ENCODE measurements at regions of chr6 and their contacts with region 1.

Region 1: DNA sequence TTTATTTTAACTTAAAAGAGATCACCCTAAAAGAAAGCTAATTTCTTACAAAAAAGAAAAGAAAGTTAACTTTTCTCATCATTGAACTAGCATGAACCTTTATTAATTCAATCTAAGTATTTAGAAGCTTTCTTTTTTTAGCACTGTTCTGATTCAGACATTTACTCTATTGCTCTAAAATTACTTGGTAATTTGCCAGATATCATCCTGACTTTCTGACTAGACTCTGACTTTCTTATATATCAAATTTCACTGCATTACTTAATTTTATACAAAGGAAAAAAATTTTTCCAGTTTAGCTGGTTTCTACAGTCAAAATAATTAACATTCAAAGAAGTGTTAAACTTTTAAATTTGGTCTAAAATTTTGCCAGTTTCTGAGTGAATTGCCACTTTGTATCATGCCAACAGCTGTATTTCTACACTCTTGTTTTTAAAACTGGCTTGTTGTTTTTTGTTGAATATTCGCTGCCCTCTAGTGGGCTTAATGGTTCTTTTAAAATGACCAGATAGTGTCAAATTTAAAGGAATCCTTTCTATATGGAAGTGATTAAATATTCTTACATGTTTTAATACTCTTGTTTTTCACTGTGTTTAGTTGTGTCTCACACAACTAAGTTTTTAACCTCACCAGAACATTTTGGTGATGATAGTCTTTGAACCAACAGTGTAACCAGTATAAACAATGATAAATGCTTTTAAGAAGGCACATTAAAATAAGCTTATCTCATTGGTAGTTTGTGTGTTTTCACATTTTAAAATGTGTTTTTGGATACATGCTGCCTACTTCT is 102.0 kb downstream of the POPDC3 start:
- DNase-seq: peak in 1 of 2 experiments; percentile 22
- H3K4me3 ChIP-seq: no peak overlapping the region
- H3K4me3 Mint-ChIP-seq: no peak overlapping the region
- H3K27ac Mint-ChIP-seq: no peak overlapping the region
- H3K4me1 ChIP-seq: 0 out of 2 replicates have a peak, but pooled peaks cover 2% of the 10 kb centered on the region
- H3K4me1 Mint-ChIP-seq: peaks cover 7% of the 10 kb centered on the region
- H3K27me3 ChIP-seq: no peaks in the 10 kb centered on the region
- H3K27me3 Mint-ChIP-seq: no peaks in the 10 kb centered on the region
- CTCF ChIP-seq: peak; percentile 44 to 48

Region 2: GRCh38 chr6:104548297-104548696 is 529.5 kb before region 1 on chr6:
- CTCF ChIA-PET with region 1: no interaction called
- POLR2A ChIA-PET with region 1: no interaction called
- intact Hi-C with region 1: no loop called
- DNase-seq: no peak
- H3K4me3 ChIP-seq: no peak overlapping the region
- H3K4me3 Mint-ChIP-seq: no peak overlapping the region
- H3K27ac Mint-ChIP-seq: no peak overlapping the region
- H3K4me1 ChIP-seq: no peaks in the 10 kb centered on the region
- H3K4me1 Mint-ChIP-seq: no peaks in the 10 kb centered on the region
- H3K27me3 ChIP-seq: no peaks in the 10 kb centered on the region
- H3K27me3 Mint-ChIP-seq: no peaks in the 10 kb centered on the region
- CTCF ChIP-seq: no peak

Region 3: GRCh38 chr6:104682722-104683643 is 394.8 kb before region 1 on chr6:
- CTCF ChIA-PET with region 1: no interaction called
- POLR2A ChIA-PET with region 1: no interaction called
- intact Hi-C with region 1: loop called (anchors 5 kb)
- DNase-seq: peak; percentile 68 to 71
- H3K4me3 ChIP-seq: no peak overlapping the region
- H3K4me3 Mint-ChIP-seq: no peak overlapping the region
- H3K27ac Mint-ChIP-seq: no peak overlapping the region
- H3K4me1 ChIP-seq: no peaks in the 10 kb centered on the region
- H3K4me1 Mint-ChIP-seq: no peaks in the 10 kb centered on the region
- H3K27me3 ChIP-seq: no peaks in the 10 kb centered on the region
- H3K27me3 Mint-ChIP-seq: no peaks in the 10 kb centered on the region
- CTCF ChIP-seq: peak; percentile 74 to 86

Region 4: DNA sequence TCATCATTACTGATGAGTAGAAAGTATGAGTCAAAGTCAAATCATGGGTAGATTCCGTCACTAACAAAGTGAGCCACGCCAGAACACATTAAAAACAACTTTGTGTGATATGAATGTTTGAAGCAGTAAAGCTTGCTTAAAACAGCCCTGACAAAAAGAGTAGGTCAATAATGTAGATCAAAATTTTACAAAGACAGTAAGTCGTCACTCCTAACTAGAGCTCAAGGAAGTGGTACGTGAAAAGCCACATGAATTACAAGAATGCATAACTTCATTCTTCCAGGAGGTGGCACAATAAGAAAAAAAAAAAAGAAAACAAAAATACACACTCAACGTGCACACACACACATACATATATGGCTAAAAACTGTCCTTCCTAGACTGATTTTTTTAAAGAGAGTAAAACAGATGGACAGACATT is 288.0 kb before region 1 on chr6:
- CTCF ChIA-PET with region 1: no interaction called
- POLR2A ChIA-PET with region 1: no interaction called
- intact Hi-C with region 1: loop called (anchors 1 kb)
- DNase-seq: peak in 1 of 2 experiments; percentile 18
- H3K4me3 ChIP-seq: no peak overlapping the region
- H3K4me3 Mint-ChIP-seq: no peak overlapping the region
- H3K27ac Mint-ChIP-seq: no peak overlapping the region
- H3K4me1 ChIP-seq: no peaks in the 10 kb centered on the region
- H3K4me1 Mint-ChIP-seq: peaks cover 7% of the 10 kb centered on the region
- H3K27me3 ChIP-seq: no peaks in the 10 kb centered on the region
- H3K27me3 Mint-ChIP-seq: no peaks in the 10 kb centered on the region
- CTCF ChIP-seq: peak in 1 of 2 experiments; percentile 29

Region 5: DNA sequence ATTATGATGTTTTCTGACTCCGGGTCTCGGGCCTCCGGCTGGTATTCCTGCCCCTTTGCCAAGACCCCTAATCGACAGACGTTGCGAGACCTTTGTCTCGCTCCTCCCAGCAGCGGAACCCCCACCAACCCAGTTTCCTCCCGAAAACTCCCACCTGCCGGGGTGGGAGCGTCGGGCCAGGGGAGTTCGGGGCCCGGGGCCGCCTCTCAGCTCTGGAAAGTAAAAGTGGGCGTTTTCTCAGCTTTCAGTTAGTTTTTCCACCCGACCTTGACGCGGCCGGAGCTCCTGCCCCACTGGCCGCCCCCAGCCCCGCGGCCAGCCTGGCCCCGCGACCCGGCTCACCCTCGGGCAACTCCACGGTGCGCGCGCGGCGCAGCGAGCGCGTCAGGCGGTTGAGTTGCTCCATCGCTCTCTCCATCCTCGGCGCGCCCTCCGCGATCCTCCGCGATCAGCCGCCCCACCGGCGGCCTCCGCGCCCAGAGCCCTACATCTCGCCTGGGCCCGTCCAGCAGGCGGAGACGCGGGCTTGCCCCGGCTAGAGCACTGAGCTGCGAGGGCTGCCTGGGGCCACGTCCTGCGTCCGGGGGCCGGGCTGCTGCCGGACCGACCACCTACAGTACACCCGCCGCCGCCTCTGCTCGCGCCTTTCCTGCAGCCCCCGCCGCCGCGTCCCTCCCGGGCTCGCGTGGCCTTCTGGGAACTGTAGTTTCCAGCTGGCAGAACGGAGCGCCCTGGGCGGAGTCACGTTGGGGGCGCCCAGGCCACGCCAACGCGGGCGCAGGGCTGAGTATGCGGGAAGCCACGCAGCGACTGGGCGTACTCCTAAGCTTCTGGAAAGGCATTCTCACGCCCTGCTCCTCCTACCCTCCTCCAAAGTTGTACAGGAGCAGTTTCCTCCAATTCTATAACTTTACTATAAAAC is 218.3 kb before region 1 on chr6 and contains the start of gene HACE1:
- CTCF ChIA-PET with region 1: interaction called, 10 read pairs
- POLR2A ChIA-PET with region 1: no interaction called
- intact Hi-C with region 1: no loop called
- DNase-seq: peak; percentile 84 to 89
- H3K4me3 ChIP-seq: peak within 1 kb of the TSS; percentile 99
- H3K4me3 Mint-ChIP-seq: peak within 1 kb of the TSS; percentile 82
- H3K27ac Mint-ChIP-seq: no peak within 1 kb of the TSS
- H3K4me1 ChIP-seq: no peaks in the 10 kb centered on the region
- H3K4me1 Mint-ChIP-seq: peaks cover 8% of the 10 kb centered on the region
- H3K27me3 ChIP-seq: no peaks in the 10 kb centered on the region
- H3K27me3 Mint-ChIP-seq: peaks cover 3% of the 10 kb centered on the region
- CTCF ChIP-seq: peak in 1 of 2 experiments; percentile 11
- total RNA-seq, gene HACE1: 10.0 and 13.2 TPM in 2 replicates

Region 6: GRCh38 chr6:104896914-104897313 is 180.9 kb before region 1 on chr6:
- CTCF ChIA-PET with region 1: no interaction called
- POLR2A ChIA-PET with region 1: no interaction called
- intact Hi-C with region 1: loop called (anchors 1 kb)
- DNase-seq: no peak
- H3K4me3 ChIP-seq: no peak overlapping the region
- H3K4me3 Mint-ChIP-seq: no peak overlapping the region
- H3K27ac Mint-ChIP-seq: no peak overlapping the region
- H3K4me1 ChIP-seq: no peaks in the 10 kb centered on the region
- H3K4me1 Mint-ChIP-seq: no peaks in the 10 kb centered on the region
- H3K27me3 ChIP-seq: no peaks in the 10 kb centered on the region
- H3K27me3 Mint-ChIP-seq: peaks cover 3% of the 10 kb centered on the region
- CTCF ChIP-seq: peak; percentile 18 to 40

Region 7: DNA sequence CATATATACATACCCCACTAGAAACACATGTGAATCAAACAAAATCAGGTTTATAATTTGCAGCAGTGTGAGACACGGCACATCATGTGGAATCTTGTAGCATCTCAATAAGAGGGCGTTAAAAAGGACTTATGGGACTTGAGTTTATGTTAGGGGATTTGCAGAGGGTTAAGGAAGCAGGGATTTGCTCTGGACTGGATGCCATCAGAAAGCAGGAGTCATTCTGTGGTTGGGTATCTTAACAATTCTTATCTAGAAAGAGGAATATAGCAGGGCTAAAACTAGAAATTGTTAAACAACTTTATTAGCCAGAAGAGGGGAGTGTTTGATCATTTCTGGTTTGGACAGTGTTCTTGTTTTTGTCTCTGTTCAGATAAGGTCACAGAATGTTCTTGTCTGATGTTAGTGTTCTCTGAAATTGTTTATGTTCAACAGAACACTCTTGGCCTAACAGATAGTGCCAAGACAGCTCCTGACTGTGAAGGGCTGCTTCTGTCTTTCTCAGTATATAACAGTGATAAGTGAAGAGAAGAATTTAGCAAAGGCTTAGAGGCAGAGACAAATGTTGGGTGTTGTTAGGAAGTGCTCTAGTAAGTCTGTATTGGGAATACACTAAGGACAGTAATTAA is 81.7 kb before region 1 on chr6:
- CTCF ChIA-PET with region 1: interaction called, 13 read pairs
- POLR2A ChIA-PET with region 1: no interaction called
- intact Hi-C with region 1: loop called (anchors 1 kb)
- DNase-seq: peak in 1 of 2 experiments; percentile 33
- H3K4me3 ChIP-seq: no peak overlapping the region
- H3K4me3 Mint-ChIP-seq: no peak overlapping the region
- H3K27ac Mint-ChIP-seq: no peak overlapping the region
- H3K4me1 ChIP-seq: peaks cover 6% of the 10 kb centered on the region; the same call in 1 of the 2 replicates
- H3K4me1 Mint-ChIP-seq: peaks cover under 1% of the 10 kb centered on the region
- H3K27me3 ChIP-seq: no peaks in the 10 kb centered on the region
- H3K27me3 Mint-ChIP-seq: no peaks in the 10 kb centered on the region
- CTCF ChIP-seq: peak; percentile 22 to 34

Region 8: GRCh38 chr6:105024803-105025202 is 53.0 kb before region 1 on chr6:
- CTCF ChIA-PET with region 1: no interaction called
- POLR2A ChIA-PET with region 1: no interaction called
- intact Hi-C with region 1: no loop called
- DNase-seq: no peak
- H3K4me3 ChIP-seq: no peak overlapping the region
- H3K4me3 Mint-ChIP-seq: no peak overlapping the region
- H3K27ac Mint-ChIP-seq: no peak overlapping the region
- H3K4me1 ChIP-seq: peaks cover 5% of the 10 kb centered on the region
- H3K4me1 Mint-ChIP-seq: peaks cover 16% of the 10 kb centered on the region
- H3K27me3 ChIP-seq: no peaks in the 10 kb centered on the region
- H3K27me3 Mint-ChIP-seq: no peaks in the 10 kb centered on the region
- CTCF ChIP-seq: no peak

Region 9: DNA sequence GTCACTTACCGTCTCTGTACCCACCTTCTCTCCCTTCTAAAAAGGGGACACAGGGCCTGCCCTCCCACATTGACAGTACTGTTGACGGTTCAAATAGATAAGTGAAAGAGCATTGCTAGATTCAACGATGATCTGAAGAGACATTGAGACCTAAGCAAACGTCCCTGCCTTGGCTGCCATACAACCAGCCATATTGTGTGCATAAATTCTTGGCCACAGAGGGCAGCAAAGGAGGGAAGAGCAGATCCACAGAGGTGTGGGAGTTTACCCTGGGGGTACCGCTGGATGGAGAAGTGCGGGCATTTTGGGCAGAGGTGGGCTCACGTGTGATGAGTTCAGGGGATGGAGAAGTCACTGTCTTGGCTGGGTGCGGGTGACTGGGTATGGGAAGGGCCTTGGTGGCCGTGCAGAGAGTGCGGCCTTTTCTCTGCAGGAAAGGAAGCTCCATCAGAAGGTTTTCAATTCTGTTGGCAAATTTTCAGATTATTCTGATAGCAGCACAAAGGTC is 16.4 kb after region 1 on chr6:
- CTCF ChIA-PET with region 1: no interaction called
- POLR2A ChIA-PET with region 1: no interaction called
- intact Hi-C with region 1: no loop called
- DNase-seq: no peak
- H3K4me3 ChIP-seq: no peak overlapping the region
- H3K4me3 Mint-ChIP-seq: no peak overlapping the region
- H3K27ac Mint-ChIP-seq: no peak overlapping the region
- H3K4me1 ChIP-seq: no peaks in the 10 kb centered on the region
- H3K4me1 Mint-ChIP-seq: peaks cover 8% of the 10 kb centered on the region
- H3K27me3 ChIP-seq: no peaks in the 10 kb centered on the region
- H3K27me3 Mint-ChIP-seq: no peaks in the 10 kb centered on the region
- CTCF ChIP-seq: no peak